B cell (primary cell): ENCODE measurements at regions of chr12 and their contacts with region 1.

Region 1: GRCh38 chr12:49288412-49288853 is 6.5 kb upstream of the PRPH start:
- DNase-seq: peak; percentile 83
- ATAC-seq: peak; percentile 53
- H3K4me3 ChIP-seq: no peak overlapping the region
- H3K4me3 Mint-ChIP-seq: no peak overlapping the region
- H3K27ac ChIP-seq: no peak overlapping the region
- H3K27ac Mint-ChIP-seq: no peak overlapping the region
- H3K4me1 ChIP-seq: no peaks in the 10 kb centered on the region
- H3K4me1 Mint-ChIP-seq: no peaks in the 10 kb centered on the region
- H3K27me3 ChIP-seq: peaks cover 0 to 33% (median 5%) of the 10 kb centered on the region in 4 experiments
- H3K27me3 Mint-ChIP-seq: peaks cover 28% of the 10 kb centered on the region
- CTCF ChIP-seq: peak; percentile 95

Region 2: GRCh38 chr12:49219417-49220026 is 68.9 kb before region 1 on chr12:
- CTCF ChIA-PET with region 1: no interaction called
- POLR2A ChIA-PET with region 1: no interaction called
- intact Hi-C with region 1: no loop called
- DNase-seq: no peak
- ATAC-seq: no peak
- H3K4me3 ChIP-seq: no peak overlapping the region
- H3K4me3 Mint-ChIP-seq: no peak overlapping the region
- H3K27ac ChIP-seq: no peak overlapping the region
- H3K27ac Mint-ChIP-seq: no peak overlapping the region
- H3K4me1 ChIP-seq: no peaks in the 10 kb centered on the region
- H3K4me1 Mint-ChIP-seq: no peaks in the 10 kb centered on the region
- H3K27me3 ChIP-seq: no peaks in the 10 kb centered on the region
- H3K27me3 Mint-ChIP-seq: peaks cover 8% of the 10 kb centered on the region
- CTCF ChIP-seq: no peak

Region 3: GRCh38 chr12:49304161-49304560 is 15.7 kb after region 1 on chr12:
- CTCF ChIA-PET with region 1: interaction called, 11 read pairs
- POLR2A ChIA-PET with region 1: no interaction called
- intact Hi-C with region 1: no loop called
- DNase-seq: no peak
- ATAC-seq: no peak
- H3K4me3 ChIP-seq: no peak overlapping the region
- H3K4me3 Mint-ChIP-seq: no peak overlapping the region
- H3K27ac ChIP-seq: no peak overlapping the region
- H3K27ac Mint-ChIP-seq: no peak overlapping the region
- H3K4me1 ChIP-seq: no peaks in the 10 kb centered on the region
- H3K4me1 Mint-ChIP-seq: no peaks in the 10 kb centered on the region
- H3K27me3 ChIP-seq: peaks cover 0 to 20% (median 3%) of the 10 kb centered on the region in 4 experiments
- H3K27me3 Mint-ChIP-seq: peaks cover 54% of the 10 kb centered on the region
- CTCF ChIP-seq: no peak

Region 4: GRCh38 chr12:49331380-49332222 is 43.2 kb after region 1 on chr12:
- CTCF ChIA-PET with region 1: interaction called, 23 read pairs
- POLR2A ChIA-PET with region 1: no interaction called
- intact Hi-C with region 1: no loop called
- DNase-seq: peak; percentile 37
- ATAC-seq: no peak
- H3K4me3 ChIP-seq: no peak overlapping the region
- H3K4me3 Mint-ChIP-seq: peak overlapping the region; percentile 29
- H3K27ac ChIP-seq: no peak overlapping the region
- H3K27ac Mint-ChIP-seq: no peak overlapping the region
- H3K4me1 ChIP-seq: peaks cover 19 to 23% of the 10 kb centered on the region in 2 donors
- H3K4me1 Mint-ChIP-seq: peaks cover 19% of the 10 kb centered on the region
- H3K27me3 ChIP-seq: peaks cover 0 to 51% (median 32%) of the 10 kb centered on the region in 4 experiments
- H3K27me3 Mint-ChIP-seq: peaks cover 38% of the 10 kb centered on the region
- CTCF ChIP-seq: peak; percentile 45

Region 5: DNA sequence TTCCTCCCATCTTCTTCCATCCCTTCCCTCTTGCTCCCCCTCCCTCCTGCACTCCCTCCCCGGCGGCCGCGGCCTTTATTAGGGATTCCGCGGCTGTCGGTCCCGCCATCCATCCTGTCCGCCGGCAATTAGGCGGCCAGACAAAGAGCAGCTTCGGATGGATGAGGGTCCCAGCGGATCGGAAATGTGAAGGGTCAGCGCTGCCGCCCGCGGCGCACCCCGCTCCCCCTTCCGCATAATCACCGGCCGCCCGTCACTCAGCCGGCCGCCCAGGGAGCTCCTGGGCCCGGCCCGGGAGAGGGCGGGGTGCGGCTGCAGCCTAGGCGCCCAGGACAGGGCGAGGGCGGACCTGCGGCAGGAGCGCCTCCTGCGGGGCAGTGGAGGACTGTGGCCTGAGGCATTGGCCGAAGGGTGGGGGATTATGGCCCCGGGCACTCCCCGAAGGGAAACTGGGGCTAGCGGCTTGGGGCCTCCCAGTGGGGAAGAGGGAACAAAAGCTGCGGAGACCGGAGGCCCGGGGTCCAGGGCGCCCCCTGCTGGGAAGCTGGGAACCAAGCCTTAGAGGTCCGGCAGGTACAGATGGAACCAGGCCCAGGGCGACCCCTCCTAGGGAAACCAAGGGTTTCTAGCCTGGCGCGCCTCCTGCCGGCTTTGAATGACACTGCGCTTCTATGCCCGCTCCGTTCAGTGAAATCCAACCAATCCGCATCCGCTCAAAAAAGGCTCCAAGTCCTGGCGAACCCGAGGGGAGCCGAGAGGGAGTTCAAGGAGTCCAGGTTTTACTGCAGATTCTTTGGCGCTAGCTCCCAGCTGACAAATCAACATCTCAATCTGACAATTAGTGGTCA is 53.9 kb after region 1 on chr12:
- CTCF ChIA-PET with region 1: interaction called, 139 read pairs
- POLR2A ChIA-PET with region 1: no interaction called
- intact Hi-C with region 1: loop called (anchors 1 kb)
- DNase-seq: peak; percentile 83
- ATAC-seq: peak; percentile 69
- H3K4me3 ChIP-seq: peak overlapping the region in 4 of 5 experiments; percentile 29 to 51 (median 44)
- H3K4me3 Mint-ChIP-seq: peak overlapping the region; percentile 86
- H3K27ac ChIP-seq: no peak overlapping the region
- H3K27ac Mint-ChIP-seq: no peak overlapping the region
- H3K4me1 ChIP-seq: peaks cover 60 to 65% of the 10 kb centered on the region in 2 donors
- H3K4me1 Mint-ChIP-seq: peaks cover 58% of the 10 kb centered on the region
- H3K27me3 ChIP-seq: peaks cover 0 to 89% (median 47%) of the 10 kb centered on the region in 4 experiments
- H3K27me3 Mint-ChIP-seq: peaks cover 53% of the 10 kb centered on the region
- CTCF ChIP-seq: peak; percentile 96

Region 6: DNA sequence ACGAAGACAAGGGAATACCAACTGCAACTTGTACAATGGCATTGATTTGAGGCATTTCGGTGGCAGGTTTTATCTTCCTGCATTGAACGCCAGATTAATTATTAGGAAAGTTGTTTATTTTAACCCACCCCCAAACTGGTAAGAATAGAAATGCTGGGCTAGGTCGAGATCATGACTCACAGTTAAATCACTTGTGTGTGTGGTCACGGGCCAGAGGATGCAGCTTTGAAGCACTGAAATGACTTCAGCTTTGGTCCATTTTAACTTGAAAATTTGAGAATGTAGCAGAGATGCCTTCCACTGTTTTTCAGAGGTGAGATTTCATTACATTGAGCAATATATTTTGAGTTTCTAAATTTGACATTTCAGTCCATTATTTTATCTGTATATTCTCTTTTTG is 226.8 kb after region 1 on chr12:
- CTCF ChIA-PET with region 1: interaction called, 97 read pairs
- POLR2A ChIA-PET with region 1: no interaction called
- intact Hi-C with region 1: loop called (anchors 1 kb)
- DNase-seq: no peak
- ATAC-seq: no peak
- H3K4me3 ChIP-seq: no peak overlapping the region
- H3K4me3 Mint-ChIP-seq: no peak overlapping the region
- H3K27ac ChIP-seq: no peak overlapping the region
- H3K27ac Mint-ChIP-seq: no peak overlapping the region
- H3K4me1 ChIP-seq: no peaks in the 10 kb centered on the region
- H3K4me1 Mint-ChIP-seq: no peaks in the 10 kb centered on the region
- H3K27me3 ChIP-seq: no peaks in the 10 kb centered on the region
- H3K27me3 Mint-ChIP-seq: no peaks in the 10 kb centered on the region
- CTCF ChIP-seq: no peak